ENCODE measurements at regions of chr2 and their contacts with region 1.

Region 1: DNA sequence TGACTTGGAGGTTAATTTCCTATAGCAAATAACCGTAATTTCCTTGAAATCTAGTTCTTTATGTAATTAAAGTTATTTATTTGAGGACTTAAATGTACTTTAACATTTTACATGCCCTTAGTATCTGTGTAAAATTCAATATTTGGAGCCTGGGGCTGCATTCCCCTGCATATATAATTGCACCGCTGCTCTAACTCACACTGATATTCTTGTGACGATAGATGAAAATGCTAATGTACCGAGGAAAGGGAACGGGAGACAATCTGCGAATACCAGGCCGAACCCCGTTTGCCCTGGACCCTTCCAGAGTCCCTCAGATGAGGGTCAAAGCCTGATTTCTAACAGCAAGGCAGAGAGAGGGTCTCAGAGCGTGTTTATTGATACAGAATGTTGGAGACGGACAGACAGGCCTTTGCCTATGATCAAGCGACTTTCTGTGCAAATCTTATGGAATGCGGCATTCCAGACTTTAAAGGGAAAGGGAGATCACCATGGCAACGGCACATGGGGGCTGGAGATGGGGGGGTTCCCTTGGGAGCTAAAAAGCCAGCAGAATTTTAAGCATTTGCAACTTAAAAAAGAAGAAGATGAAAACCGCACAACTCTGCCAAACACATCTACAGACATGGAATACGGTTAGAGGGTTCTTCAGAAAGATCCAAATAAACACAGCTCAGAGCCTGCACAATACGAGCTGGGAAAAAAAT is 57.6 kb upstream of the TWIST2 start:
- DNase-seq: no peak
- H3K4me3 ChIP-seq: no peak overlapping the region
- H3K27ac ChIP-seq: no peak overlapping the region
- H3K4me1 ChIP-seq: no peaks in the 10 kb centered on the region
- H3K27me3 ChIP-seq: no peaks in the 10 kb centered on the region
- CTCF ChIP-seq: no peak
- EP300 ChIP-seq: no peak
- POLR2A ChIP-seq: no peak

Region 2: DNA sequence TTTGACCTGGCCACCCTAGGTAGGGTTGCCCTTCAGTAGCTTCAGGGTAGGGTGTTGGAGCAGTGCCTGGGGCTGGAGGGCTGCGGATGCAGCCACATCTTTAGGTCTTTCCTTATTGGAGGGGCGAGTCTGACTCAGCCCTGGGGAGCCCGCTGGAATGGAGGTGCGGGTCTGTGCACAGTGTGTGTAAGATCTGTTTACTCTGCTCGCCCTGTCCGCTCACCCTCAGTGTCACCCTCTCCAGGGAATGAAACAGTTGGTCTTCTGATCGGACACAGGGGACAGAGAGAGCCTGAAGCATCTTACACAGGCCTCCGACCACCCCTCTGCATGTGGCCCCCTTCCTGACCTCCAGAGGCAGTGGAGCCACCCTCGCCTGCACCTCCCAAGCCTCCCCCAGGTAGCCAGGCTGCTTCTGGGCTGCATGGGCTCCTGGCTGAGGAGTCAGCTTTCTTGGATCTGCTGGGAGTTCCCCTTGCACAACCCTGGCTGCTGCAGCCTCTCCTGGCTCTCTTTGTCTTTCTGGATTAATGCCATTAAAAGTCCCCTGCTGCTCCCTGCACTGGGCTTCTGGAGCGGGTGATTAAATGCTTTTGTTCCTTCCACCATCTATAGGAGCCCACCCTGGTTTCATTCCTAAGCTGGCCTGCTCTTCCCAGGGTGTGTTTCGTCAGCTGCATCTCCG is 281.0 kb before region 1 on chr2:
- intact Hi-C with region 1: loop called in 1 of 4 experiments (anchors 10 kb)
- DNase-seq: no peak
- H3K4me3 ChIP-seq: no peak overlapping the region
- H3K27ac ChIP-seq: no peak overlapping the region
- H3K4me1 ChIP-seq: no peaks in the 10 kb centered on the region
- H3K27me3 ChIP-seq: no peaks in the 10 kb centered on the region
- CTCF ChIP-seq: no peak
- EP300 ChIP-seq: no peak
- POLR2A ChIP-seq: no peak

Region 3: GRCh38 chr2:238601433-238602222 is 188.7 kb before region 1 on chr2:
- intact Hi-C with region 1: no loop called
- DNase-seq: peak in 1 of 5 donors; percentile 65
- H3K4me3 ChIP-seq: no peak overlapping the region
- H3K27ac ChIP-seq: no peak overlapping the region
- H3K4me1 ChIP-seq: peaks cover 6% of the 10 kb centered on the region
- H3K27me3 ChIP-seq: no peaks in the 10 kb centered on the region
- CTCF ChIP-seq: no peak
- EP300 ChIP-seq: no peak
- POLR2A ChIP-seq: no peak